Mammary epithelial cell (primary cell): ENCODE measurements at regions of chr9 and their contacts with region 1.

Region 1: GRCh38 chr9:127022913-127023660 is 99.3 kb downstream of the ANGPTL2 start:
- DNase-seq: no peak
- H3K4me3 ChIP-seq: no peak overlapping the region
- H3K27ac ChIP-seq: no peak overlapping the region
- H3K4me1 ChIP-seq: no peaks in the 10 kb centered on the region
- H3K27me3 ChIP-seq: peaks cover 8% of the 10 kb centered on the region
- CTCF ChIP-seq: no peak

Region 2: DNA sequence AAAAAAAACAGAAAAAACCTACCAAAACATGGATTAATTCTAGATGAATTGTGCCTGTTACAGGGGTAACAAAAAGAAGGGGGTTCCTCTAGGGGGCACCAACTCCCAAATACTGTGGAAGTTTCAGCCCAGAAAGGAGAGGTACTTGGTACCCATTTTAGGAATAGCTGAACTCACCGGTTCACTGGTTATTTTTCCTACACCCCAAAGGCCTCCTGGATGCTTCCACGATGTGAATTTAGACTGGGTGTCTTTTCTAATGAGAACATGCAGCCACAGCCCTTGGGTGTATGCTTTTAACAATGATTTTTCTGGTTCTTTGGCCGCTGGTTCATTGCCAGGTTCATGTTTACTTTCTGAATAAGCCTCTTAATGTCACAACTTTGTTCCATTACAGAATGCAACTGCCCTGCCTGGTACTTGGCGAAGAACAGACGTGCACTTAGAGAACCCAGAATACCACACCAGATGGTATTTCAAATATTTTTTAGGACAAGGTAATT is 288.2 kb after region 1 on chr9:
- CTCF ChIA-PET with region 1: no interaction called
- dilution Hi-C with region 1: no loop called
- in situ Hi-C with region 1: no loop called
- intact Hi-C with region 1: no loop called
- DNase-seq: peak; percentile 41
- H3K4me3 ChIP-seq: no peak overlapping the region
- H3K27ac ChIP-seq: no peak overlapping the region
- H3K4me1 ChIP-seq: no peaks in the 10 kb centered on the region
- H3K27me3 ChIP-seq: no peaks in the 10 kb centered on the region
- CTCF ChIP-seq: peak; percentile 31 to 51

Region 3: GRCh38 chr9:127423934-127424675 is 401.0 kb after region 1 on chr9 and contains the start of gene ZNF79:
- CTCF ChIA-PET with region 1: interaction called, 11 read pairs
- dilution Hi-C with region 1: no loop called
- in situ Hi-C with region 1: no loop called
- intact Hi-C with region 1: no loop called
- DNase-seq: peak; percentile 90
- H3K4me3 ChIP-seq: peak within 1 kb of the TSS; percentile 67 to 88 (median 84)
- H3K27ac ChIP-seq: peak within 1 kb of the TSS; percentile 63
- H3K4me1 ChIP-seq: peaks cover 21% of the 10 kb centered on the region
- H3K27me3 ChIP-seq: no peaks in the 10 kb centered on the region
- CTCF ChIP-seq: no peak
- total RNA-seq, gene ZNF79: 10.5 to 16.8 TPM